T-cell (primary cell): ENCODE measurements at regions of chr6 and their contacts with region 1.

Region 1: DNA sequence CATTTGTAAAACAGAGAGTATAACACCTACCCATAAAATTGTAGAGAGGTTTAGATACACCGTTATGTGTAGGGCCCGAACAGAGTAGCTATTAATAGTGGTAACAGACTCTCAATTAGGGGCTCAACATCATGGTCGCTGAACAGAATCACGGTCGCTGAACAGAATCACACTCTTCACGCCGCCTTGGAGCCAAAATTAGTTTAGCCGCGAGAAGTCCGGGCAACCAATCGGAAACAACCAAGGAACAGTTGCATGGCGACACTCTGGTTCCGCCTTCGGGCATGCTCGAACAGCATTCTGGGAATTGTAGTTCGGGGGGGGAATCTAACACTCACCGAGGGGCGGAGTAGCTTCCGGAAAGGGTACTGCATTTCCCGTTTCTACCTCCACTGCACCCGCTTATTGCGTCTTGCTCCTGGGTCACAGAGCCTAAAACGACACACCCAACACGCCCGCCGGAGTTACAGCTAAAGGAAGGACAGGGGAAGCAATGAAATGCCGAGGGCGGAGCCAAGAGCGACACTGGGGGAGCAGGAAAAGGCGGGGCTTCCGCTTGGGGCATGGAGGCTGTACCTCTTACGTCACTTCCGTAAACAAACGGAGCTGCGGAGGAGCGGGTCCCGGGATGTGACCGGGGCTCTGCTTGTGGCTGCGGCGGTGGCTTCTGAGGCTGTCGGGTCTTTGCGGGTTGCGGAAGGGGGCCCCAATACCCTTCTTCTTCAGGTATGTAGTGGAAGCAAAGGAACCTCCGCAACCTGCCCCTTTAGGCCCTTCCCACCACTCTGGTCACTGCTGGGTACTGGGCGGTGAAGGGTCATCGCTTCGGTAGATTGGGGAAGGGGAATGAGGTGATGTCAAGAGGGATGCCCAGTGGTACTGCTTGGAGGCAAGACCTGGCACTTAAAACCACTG is at the start of gene CCDC28A:
- DNase-seq: peak; percentile 87 to 96 (median 93)
- ATAC-seq: peak; percentile 88 to 92 (median 88)
- H3K4me3 ChIP-seq: peak within 1 kb of the TSS; percentile 94 to 96
- H3K4me3 Mint-ChIP-seq: peak within 1 kb of the TSS; percentile 89 to 98 (median 98)
- H3K27ac ChIP-seq: peak within 1 kb of the TSS; percentile 96
- H3K27ac Mint-ChIP-seq: peak within 1 kb of the TSS; percentile 100
- H3K4me1 ChIP-seq: peaks cover 3 to 18% of the 10 kb centered on the region in 2 experiments
- H3K4me1 Mint-ChIP-seq: peaks cover 23 to 39% (median 29%) of the 10 kb centered on the region in 3 donors
- H3K27me3 ChIP-seq: no peaks in the 10 kb centered on the region
- H3K27me3 Mint-ChIP-seq: no peaks in the 10 kb centered on the region
- total RNA-seq, gene CCDC28A: 20.4 to 24.2 (median 23.3) TPM

Region 2: GRCh38 chr6:138785980-138786379 is 12.5 kb after region 1 on chr6:
- CTCF ChIA-PET with region 1: no interaction called
- POLR2A ChIA-PET with region 1: interaction called in 1 of 2 experiments, 12 read pairs
- DNase-seq: no peak
- ATAC-seq: no peak
- H3K4me3 ChIP-seq: no peak overlapping the region
- H3K4me3 Mint-ChIP-seq: no peak overlapping the region
- H3K27ac ChIP-seq: no peak overlapping the region
- H3K27ac Mint-ChIP-seq: no peak overlapping the region
- H3K4me1 ChIP-seq: no peaks in the 10 kb centered on the region
- H3K4me1 Mint-ChIP-seq: peaks cover 7 to 11% (median 7%) of the 10 kb centered on the region in 3 donors
- H3K27me3 ChIP-seq: no peaks in the 10 kb centered on the region
- H3K27me3 Mint-ChIP-seq: peaks cover 0 to 1% of the 10 kb centered on the region in 2 donors